CD4-positive, alpha-beta memory T cell (primary cell): ENCODE measurements at regions of chr1 and their contacts with region 1.

Region 1: DNA sequence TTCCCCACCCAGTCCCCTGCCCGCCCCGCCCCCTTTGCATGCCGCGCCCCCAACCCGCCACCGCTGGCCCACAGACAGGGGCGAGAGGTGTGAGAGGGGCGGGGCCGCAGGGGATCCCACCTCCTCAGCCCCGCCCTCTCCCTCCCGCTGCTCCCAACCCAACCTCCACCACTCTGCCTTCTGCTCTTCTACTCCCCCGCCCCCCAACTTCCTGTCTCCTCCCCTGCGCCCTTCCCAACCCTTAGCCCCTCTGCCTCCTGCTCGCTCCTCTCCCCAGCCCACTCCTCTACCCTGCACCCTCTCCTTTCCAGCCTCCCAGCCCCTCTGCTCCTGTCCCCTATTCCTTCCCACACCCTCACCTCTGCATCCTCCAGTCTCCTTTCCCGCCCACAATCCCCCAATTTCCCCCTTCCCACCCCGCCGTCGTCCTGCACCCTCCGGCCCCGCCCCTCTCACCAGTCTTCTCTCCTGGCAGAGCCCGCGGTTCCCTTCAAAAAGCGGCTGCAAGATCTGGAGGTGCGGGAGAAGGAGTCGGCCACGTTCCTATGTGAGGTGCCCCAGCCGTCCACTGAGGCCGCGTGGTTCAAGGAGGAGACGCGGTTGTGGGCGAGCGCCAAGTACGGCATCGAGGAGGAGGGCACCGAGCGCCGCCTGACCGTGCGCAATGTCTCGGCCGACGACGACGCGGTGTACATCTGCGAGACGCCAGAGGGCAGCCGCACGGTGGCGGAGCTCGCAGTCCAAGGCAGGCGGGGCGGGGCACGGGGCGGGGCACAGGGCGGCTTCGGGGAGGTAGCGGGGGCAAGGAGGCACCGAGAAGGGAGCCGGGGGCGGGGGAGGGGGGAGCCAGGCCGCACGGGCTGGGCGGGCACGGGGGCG is 5.4 kb downstream of the OBSCN start:
- DNase-seq: peak; percentile 82 to 92 (median 84)
- H3K4me3 ChIP-seq: peak overlapping the region; percentile 52
- H3K4me3 Mint-ChIP-seq: peak overlapping the region; percentile 83 to 94 (median 89)
- H3K27ac ChIP-seq: peak overlapping the region; percentile 46
- H3K27ac Mint-ChIP-seq: peak overlapping the region; percentile 68 to 95 (median 90)
- H3K4me1 ChIP-seq: peaks cover 7% of the 10 kb centered on the region
- H3K4me1 Mint-ChIP-seq: peaks cover 3 to 17% (median 9%) of the 10 kb centered on the region in 4 donors
- H3K27me3 ChIP-seq: no peaks in the 10 kb centered on the region
- H3K27me3 Mint-ChIP-seq: no peaks in the 10 kb centered on the region

Region 2: DNA sequence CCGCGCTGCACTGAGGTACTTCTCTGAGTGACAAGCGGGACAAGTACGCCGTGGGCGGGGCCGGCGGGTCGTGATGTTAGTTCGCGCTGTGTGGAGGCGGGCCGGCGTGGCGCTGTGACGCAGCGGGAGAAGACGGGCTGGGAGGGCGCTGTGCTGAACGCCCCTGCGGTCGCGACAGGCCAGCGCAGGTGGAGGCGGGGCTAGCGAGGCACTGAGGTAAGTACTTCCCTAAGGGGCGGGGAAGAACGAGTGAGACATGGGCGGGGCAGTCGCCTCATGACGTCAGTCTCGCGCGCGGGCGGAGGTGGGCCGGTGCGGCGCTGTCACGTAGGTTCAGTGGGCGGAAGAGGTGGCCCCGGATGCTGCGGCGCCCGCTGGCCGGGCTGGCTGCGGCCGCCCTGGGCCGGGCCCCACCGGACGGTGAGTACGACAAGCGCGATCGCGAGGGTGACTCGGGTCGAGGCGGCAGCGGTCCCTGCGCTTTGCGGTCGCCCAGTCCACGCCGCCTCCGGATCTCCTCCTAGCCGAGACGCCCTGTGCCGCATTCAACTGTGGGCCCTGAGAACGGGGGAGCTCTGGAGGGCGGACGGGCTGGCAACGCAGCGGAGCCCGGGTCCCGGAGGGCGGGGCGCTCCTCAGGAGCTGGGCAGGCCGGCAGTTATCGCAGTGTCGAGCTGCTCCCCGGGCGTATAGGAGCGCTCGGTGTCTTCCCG is 73.1 kb before region 1 on chr1 and contains the start of gene GUK1:
- CTCF ChIA-PET with region 1: no interaction called
- POLR2A ChIA-PET with region 1: no interaction called
- intact Hi-C with region 1: loop called (anchors 2 kb)
- DNase-seq: peak; percentile 100
- H3K4me3 ChIP-seq: peak within 1 kb of the TSS; percentile 94 to 99
- H3K4me3 Mint-ChIP-seq: peak within 1 kb of the TSS; percentile 92 to 97 (median 96)
- H3K27ac ChIP-seq: peak within 1 kb of the TSS; percentile 98
- H3K27ac Mint-ChIP-seq: peak within 1 kb of the TSS; percentile 91 to 100 (median 100)
- H3K4me1 ChIP-seq: peaks cover 47% of the 10 kb centered on the region
- H3K4me1 Mint-ChIP-seq: peaks cover 14 to 47% (median 35%) of the 10 kb centered on the region in 4 donors
- H3K27me3 ChIP-seq: no peaks in the 10 kb centered on the region
- H3K27me3 Mint-ChIP-seq: peaks cover 0 to 7% of the 10 kb centered on the region in 2 donors
- total RNA-seq, gene GUK1: 179 to 185 TPM

Region 3: DNA sequence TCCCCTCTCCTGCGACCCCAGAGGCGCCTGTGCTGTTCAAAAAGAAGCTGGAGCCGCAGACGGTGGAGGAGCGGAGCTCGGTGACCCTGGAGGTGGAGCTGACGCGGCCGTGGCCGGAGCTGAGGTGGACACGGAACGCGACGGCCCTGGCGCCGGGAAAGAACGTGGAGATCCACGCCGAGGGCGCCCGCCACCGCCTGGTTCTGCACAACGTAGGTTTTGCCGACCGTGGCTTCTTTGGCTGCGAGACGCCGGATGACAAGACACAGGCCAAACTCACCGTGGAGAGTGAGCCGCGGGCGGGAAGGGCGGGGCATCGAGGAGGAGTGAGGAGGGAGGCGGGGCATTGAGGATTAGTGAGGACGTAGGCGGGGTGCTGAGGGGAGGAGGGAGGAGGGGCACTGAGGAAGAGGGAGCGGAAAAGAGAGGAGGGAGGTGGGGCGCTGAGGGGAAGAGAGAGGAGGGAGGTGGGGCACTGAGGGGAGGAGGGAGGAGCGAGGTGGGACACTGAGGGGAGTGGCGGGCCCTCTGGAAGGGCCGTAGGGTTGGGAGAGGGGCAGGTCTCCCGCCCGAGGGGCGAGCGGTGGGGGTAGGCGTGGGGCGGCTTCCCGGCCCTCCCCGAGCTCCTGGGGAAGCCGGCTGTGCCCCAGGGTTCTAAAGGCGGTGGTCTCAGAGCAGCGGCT is 62.7 kb after region 1 on chr1:
- CTCF ChIA-PET with region 1: interaction called, 4 read pairs
- POLR2A ChIA-PET with region 1: interaction called, 7 read pairs
- intact Hi-C with region 1: loop called (anchors 1 kb)
- DNase-seq: peak; percentile 83 to 90 (median 85)
- H3K4me3 ChIP-seq: peak overlapping the region; percentile 36 to 62
- H3K4me3 Mint-ChIP-seq: peak overlapping the region; percentile 79 to 86 (median 82)
- H3K27ac ChIP-seq: peak overlapping the region; percentile 53
- H3K27ac Mint-ChIP-seq: peak overlapping the region; percentile 41 to 86 (median 60)
- H3K4me1 ChIP-seq: peaks cover 8% of the 10 kb centered on the region
- H3K4me1 Mint-ChIP-seq: peaks cover 4 to 19% (median 11%) of the 10 kb centered on the region in 4 donors
- H3K27me3 ChIP-seq: no peaks in the 10 kb centered on the region
- H3K27me3 Mint-ChIP-seq: no peaks in the 10 kb centered on the region

Region 4: DNA sequence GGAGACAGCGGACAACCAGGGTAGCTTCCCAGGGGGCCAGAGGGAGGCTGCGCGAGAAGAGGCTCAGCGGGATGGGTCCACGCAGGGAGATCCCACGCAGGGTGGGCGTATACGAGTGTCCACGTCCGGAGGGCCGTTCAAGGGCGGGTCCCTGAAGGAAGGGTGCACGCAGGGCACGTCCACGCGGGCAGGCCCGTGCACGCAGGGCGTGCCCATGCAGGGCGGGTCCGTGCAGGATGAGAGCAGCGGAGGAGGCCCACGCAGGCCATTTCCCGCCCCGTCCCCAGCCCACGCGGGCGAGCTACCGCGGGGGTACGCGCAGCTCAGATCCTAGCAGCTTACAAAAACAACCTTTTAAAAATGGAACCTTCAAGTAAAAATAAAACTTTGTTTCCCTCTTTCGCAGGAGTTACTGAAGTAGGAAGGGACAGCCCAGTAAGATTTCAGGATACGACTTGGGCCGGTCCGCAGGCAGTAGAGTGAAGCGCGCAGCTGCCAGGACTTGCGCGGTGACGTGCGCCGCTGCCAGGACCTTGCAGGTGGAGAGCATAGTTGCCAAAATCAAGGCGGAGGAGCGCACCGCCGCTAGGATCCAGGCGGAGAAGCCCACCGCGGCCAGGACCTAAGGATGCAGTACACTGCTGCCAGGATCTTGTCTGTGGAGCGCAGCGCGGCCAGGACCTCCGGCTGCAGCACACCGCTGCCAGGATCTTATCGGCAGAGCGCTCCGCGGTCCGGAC is 273.6 kb after region 1 on chr1:
- CTCF ChIA-PET with region 1: no interaction called
- POLR2A ChIA-PET with region 1: interaction called, 4 read pairs
- intact Hi-C with region 1: loop called (anchors 1 kb)
- DNase-seq: peak; percentile 83 to 90 (median 87)
- H3K4me3 ChIP-seq: peak overlapping the region; percentile 89 to 100
- H3K4me3 Mint-ChIP-seq: peak overlapping the region; percentile 88 to 98 (median 94)
- H3K27ac ChIP-seq: peak overlapping the region; percentile 99
- H3K27ac Mint-ChIP-seq: peak overlapping the region; percentile 99 to 100 (median 100)
- H3K4me1 ChIP-seq: peaks cover 32% of the 10 kb centered on the region
- H3K4me1 Mint-ChIP-seq: peaks cover 11 to 44% (median 30%) of the 10 kb centered on the region in 4 donors
- H3K27me3 ChIP-seq: no peaks in the 10 kb centered on the region
- H3K27me3 Mint-ChIP-seq: no peaks in the 10 kb centered on the region